Mammary epithelial cell (primary cell): ENCODE measurements at regions of chr11 and their contacts with region 1.

Region 1: DNA sequence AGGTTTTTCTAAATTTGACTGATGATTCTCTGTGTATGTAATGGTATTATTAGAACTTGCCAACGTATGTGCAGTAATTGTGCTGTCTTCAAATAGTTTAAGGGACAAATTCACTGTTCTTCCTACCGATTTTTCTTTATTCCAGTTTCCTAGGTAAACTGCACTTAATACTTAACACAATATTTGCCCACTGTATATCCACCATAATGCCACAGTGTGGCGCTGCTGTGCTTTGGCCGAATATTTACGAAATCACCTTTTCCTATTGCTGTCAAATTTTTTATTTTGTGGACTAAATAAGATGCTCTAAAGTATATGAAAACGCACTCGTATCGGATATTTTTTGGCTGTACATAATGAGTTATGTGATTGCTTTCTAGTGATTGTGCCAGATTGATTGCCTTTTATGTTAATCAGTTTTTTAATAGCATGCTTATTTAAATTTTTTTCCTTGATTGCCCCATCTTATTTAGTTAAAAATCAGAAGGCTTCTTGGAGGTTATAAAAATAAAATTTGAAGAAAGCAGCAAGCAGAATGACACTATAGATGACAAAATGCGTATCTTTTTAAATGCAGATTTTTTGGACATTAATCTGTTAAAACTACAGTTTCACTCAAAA is 10.5 kb downstream of the AASDHPPT start:
- DNase-seq: peak; percentile 37
- H3K4me3 ChIP-seq: no peak overlapping the region
- H3K27ac ChIP-seq: no peak overlapping the region
- H3K4me1 ChIP-seq: no peaks in the 10 kb centered on the region
- H3K27me3 ChIP-seq: no peaks in the 10 kb centered on the region
- CTCF ChIP-seq: peak; percentile 87 to 94

Region 2: GRCh38 chr11:106101819-106102218 is 13.9 kb after region 1 on chr11:
- CTCF ChIA-PET with region 1: no interaction called
- dilution Hi-C with region 1: no loop called
- in situ Hi-C with region 1: no loop called
- intact Hi-C with region 1: no loop called
- DNase-seq: peak; percentile 14
- H3K4me3 ChIP-seq: no peak overlapping the region
- H3K27ac ChIP-seq: no peak overlapping the region
- H3K4me1 ChIP-seq: no peaks in the 10 kb centered on the region
- H3K27me3 ChIP-seq: no peaks in the 10 kb centered on the region
- CTCF ChIP-seq: no peak

Region 3: DNA sequence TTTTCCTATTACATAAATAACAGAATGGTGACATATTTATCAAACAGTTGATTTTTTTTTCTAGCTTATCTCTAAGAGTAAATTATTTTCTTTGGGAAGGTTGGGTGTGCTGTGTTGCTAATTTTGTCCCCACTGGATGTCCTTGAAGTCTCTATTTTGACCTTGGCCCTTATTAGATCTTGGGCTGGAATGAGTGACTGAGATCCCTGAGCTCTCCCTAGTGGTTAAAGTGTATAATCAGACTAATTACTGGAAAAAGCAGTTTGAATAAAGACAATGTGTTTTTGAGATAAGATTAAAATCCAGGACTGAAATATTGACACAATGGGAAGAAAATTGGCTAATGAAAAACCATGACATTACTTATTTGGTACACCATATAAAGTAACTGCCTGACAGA is 45.6 kb after region 1 on chr11:
- CTCF ChIA-PET with region 1: no interaction called
- dilution Hi-C with region 1: no loop called
- in situ Hi-C with region 1: no loop called
- intact Hi-C with region 1: loop called (anchors 5 kb)
- DNase-seq: no peak
- H3K4me3 ChIP-seq: no peak overlapping the region
- H3K27ac ChIP-seq: no peak overlapping the region
- H3K4me1 ChIP-seq: no peaks in the 10 kb centered on the region
- H3K27me3 ChIP-seq: peaks cover under 1% of the 10 kb centered on the region
- CTCF ChIP-seq: peak; percentile 33 to 50

Region 4: DNA sequence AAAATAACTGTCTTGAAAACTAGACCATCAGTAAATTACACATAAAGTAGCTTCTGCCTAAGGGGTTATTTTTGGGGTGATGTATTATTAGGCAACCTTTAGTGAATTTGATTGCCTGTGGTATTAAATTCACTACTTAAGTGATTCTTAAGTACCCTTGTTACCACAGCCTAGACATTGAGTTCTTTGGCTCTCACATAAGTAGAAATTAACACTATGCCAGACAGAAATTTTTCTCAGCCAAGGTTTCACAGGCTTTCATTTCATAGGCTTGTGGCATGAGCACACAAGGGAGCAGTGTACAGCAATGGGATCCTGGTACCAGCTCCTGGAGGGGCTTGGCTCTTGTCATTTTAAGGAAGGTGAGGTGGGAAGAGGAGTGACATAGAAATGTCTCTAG is 208.0 kb after region 1 on chr11:
- CTCF ChIA-PET with region 1: no interaction called
- dilution Hi-C with region 1: no loop called
- in situ Hi-C with region 1: no loop called
- intact Hi-C with region 1: no loop called
- DNase-seq: no peak
- H3K4me3 ChIP-seq: no peak overlapping the region
- H3K27ac ChIP-seq: no peak overlapping the region
- H3K4me1 ChIP-seq: no peaks in the 10 kb centered on the region
- H3K27me3 ChIP-seq: no peaks in the 10 kb centered on the region
- CTCF ChIP-seq: no peak

Region 5: GRCh38 chr11:106306942-106307341 is 219.0 kb after region 1 on chr11:
- CTCF ChIA-PET with region 1: no interaction called
- dilution Hi-C with region 1: no loop called
- in situ Hi-C with region 1: no loop called
- intact Hi-C with region 1: loop called (anchors 1 kb)
- DNase-seq: no peak
- H3K4me3 ChIP-seq: no peak overlapping the region
- H3K27ac ChIP-seq: no peak overlapping the region
- H3K4me1 ChIP-seq: no peaks in the 10 kb centered on the region
- H3K27me3 ChIP-seq: no peaks in the 10 kb centered on the region
- CTCF ChIP-seq: peak; percentile 13 to 25

Region 6: GRCh38 chr11:106763501-106763900 is 675.6 kb after region 1 on chr11:
- CTCF ChIA-PET with region 1: no interaction called
- dilution Hi-C with region 1: no loop called
- in situ Hi-C with region 1: no loop called
- intact Hi-C with region 1: no loop called
- DNase-seq: no peak
- H3K4me3 ChIP-seq: no peak overlapping the region
- H3K27ac ChIP-seq: no peak overlapping the region
- H3K4me1 ChIP-seq: no peaks in the 10 kb centered on the region
- H3K27me3 ChIP-seq: no peaks in the 10 kb centered on the region
- CTCF ChIP-seq: no peak